Esophagus squamous epithelium (tissue), 5 donors: ENCODE measurements at regions of chr6 and their contacts with region 1.

Region 1: GRCh38 chr6:28349892-28350737 is at the start of gene ZKSCAN3:
- DNase-seq: peak; percentile 41
- H3K4me3 ChIP-seq: peak within 1 kb of the TSS; percentile 37 to 90 (median 71)
- H3K27ac ChIP-seq: peak within 1 kb of the TSS; percentile 63 to 91 (median 84)
- H3K4me1 ChIP-seq: peaks cover 19 to 47% (median 20%) of the 10 kb centered on the region in 3 donors
- H3K27me3 ChIP-seq: no peaks in the 10 kb centered on the region
- CTCF ChIP-seq: no peak
- POLR2A ChIP-seq: peak in 2 of 4 donors; percentile 10 to 40
- total RNA-seq, gene ZKSCAN3: 1.1 to 2.9 (median 2.1) TPM

Region 2: GRCh38 chr6:28252009-28252975 is 97.8 kb before region 1 on chr6 and contains the start of gene ZKSCAN4:
- intact Hi-C with region 1: loop called (anchors 10 kb)
- DNase-seq: no peak
- H3K4me3 ChIP-seq: peak within 1 kb of the TSS; percentile 72 to 88 (median 78)
- H3K27ac ChIP-seq: peak within 1 kb of the TSS; percentile 44 to 69 (median 66)
- H3K4me1 ChIP-seq: peaks cover 5 to 33% (median 13%) of the 10 kb centered on the region in 3 donors
- H3K27me3 ChIP-seq: peaks cover 0 to 23% (median 0%) of the 10 kb centered on the region in 4 donors
- CTCF ChIP-seq: no peak
- POLR2A ChIP-seq: no peak
- total RNA-seq, gene ZKSCAN4: 2.4 to 5.3 (median 3.3) TPM

Region 3: DNA sequence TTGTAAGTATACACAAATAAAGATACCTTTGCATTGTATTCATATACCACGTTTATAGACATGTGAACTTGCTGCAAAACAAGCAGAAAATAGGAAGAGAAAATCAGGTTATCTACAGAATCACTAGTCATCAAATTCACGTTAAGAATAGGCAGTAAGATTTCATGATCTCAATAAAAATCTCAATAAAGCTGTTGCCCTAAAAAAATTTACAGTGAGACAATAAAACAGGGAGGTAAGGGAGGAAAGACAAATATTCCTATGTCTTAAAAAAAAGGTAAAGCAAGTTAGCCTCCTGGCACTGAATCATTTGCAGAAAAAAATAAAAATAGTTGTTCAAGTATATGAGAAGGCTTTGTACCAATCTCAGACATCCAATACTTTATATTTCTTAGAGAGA is 219.6 kb after region 1 on chr6:
- intact Hi-C with region 1: no loop called
- DNase-seq: no peak
- H3K4me3 ChIP-seq: no peak overlapping the region
- H3K27ac ChIP-seq: no peak overlapping the region
- H3K4me1 ChIP-seq: no peaks in the 10 kb centered on the region
- H3K27me3 ChIP-seq: peaks cover 0 to 11% (median 0%) of the 10 kb centered on the region in 4 donors
- CTCF ChIP-seq: no peak
- POLR2A ChIP-seq: no peak

Region 4: GRCh38 chr6:28683944-28684538 is 333.9 kb after region 1 on chr6:
- intact Hi-C with region 1: no loop called
- DNase-seq: no peak
- H3K4me3 ChIP-seq: no peak overlapping the region
- H3K27ac ChIP-seq: no peak overlapping the region
- H3K4me1 ChIP-seq: peaks cover 0 to 6% (median 0%) of the 10 kb centered on the region in 3 donors
- H3K27me3 ChIP-seq: peaks cover 0 to 93% (median 0%) of the 10 kb centered on the region in 4 donors
- CTCF ChIP-seq: peak; percentile 15 to 60 (median 46)
- POLR2A ChIP-seq: no peak